ENCODE measurements at regions of chr4 and their contacts with region 1.

Region 1: DNA sequence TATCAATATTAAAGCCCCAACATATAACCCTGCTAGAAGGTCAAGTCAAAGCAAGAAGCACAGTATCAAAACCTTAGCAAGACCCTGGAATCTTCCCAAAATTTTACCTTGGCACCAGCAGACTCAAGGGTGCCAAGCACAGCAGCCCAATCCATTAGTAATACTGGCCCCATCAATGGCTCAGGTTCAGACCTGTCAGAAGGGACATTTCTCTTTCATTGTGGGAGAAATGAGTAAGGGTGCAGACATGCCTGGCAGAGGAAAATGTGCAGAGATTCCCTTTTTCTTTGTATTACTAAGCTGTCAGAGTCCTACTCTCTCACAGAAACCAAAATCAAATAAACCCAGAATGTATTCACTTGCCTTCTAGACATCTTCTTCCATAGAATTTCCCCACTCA is 203.9 kb downstream of the EVC2 start:
- DNase-seq: no peak
- ATAC-seq: no peak
- H3K4me3 ChIP-seq: no peak overlapping the region
- H3K27ac ChIP-seq: no peak overlapping the region
- H3K4me1 ChIP-seq: no peaks in the 10 kb centered on the region
- H3K27me3 ChIP-seq: no peaks in the 10 kb centered on the region
- CTCF ChIP-seq: no peak

Region 2: GRCh38 chr4:5470318-5471198 is 33.9 kb before region 1 on chr4:
- intact Hi-C with region 1: loop called in 1 of 10 experiments (anchors 2 kb)
- DNase-seq: no peak
- ATAC-seq: no peak
- H3K4me3 ChIP-seq: no peak overlapping the region
- H3K27ac ChIP-seq: no peak overlapping the region
- H3K4me1 ChIP-seq: no peaks in the 10 kb centered on the region
- H3K27me3 ChIP-seq: no peaks in the 10 kb centered on the region
- CTCF ChIP-seq: no peak

Region 3: GRCh38 chr4:5710961-5711478 is 206.5 kb after region 1 on chr4 and contains the start of gene EVC:
- intact Hi-C with region 1: no loop called
- DNase-seq: peak; percentile 84 to 85
- ATAC-seq: peak; percentile 86 to 93 (median 88)
- H3K4me3 ChIP-seq: peak within 1 kb of the TSS; percentile 20 to 61 (median 54)
- H3K27ac ChIP-seq: peak within 1 kb of the TSS in 8 of 10 donors; percentile 45 to 83 (median 60)
- H3K4me1 ChIP-seq: peaks cover 0 to 50% (median 23%) of the 10 kb centered on the region in 9 donors
- H3K27me3 ChIP-seq: peaks cover 0 to 54% (median 25%) of the 10 kb centered on the region in 7 donors
- CTCF ChIP-seq: no peak
- total RNA-seq, gene EVC: 3.3 to 7.5 (median 5.0) TPM

Measured in heart right ventricle (tissue), 16 donors.